Breast epithelium (tissue), 4 donors: ENCODE measurements at regions of chr17 and their contacts with region 1.

Region 1: DNA sequence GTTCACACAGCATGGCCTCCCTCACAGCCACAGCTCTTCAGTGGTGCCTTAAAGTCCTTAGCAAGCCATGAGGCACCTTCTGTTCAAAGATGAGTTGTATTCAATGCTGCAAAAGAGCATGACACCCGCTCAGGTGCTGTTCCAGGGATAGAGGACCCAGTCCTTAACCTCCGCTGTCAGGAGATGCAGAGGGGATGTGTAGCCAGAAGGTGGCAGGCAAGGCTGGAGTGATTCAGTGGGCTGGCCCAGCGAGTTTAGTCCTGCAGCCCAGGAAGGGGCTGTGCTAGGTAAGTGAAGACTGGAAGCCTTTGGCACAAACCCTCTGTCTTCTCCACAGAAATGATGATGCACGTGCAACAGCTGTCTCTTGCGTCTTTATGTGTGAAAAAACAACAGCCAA is 25.0 kb upstream of the ADAM11 start:
- DNase-seq: no peak
- H3K4me3 ChIP-seq: no peak overlapping the region
- H3K27ac ChIP-seq: no peak overlapping the region
- H3K4me1 ChIP-seq: no peaks in the 10 kb centered on the region
- H3K27me3 ChIP-seq: no peaks in the 10 kb centered on the region
- CTCF ChIP-seq: no peak
- POLR2A ChIP-seq: no peak

Region 2: GRCh38 chr17:43713494-43714162 is 1020.1 kb before region 1 on chr17:
- intact Hi-C with region 1: loop called (anchors 5 kb)
- DNase-seq: no peak
- H3K4me3 ChIP-seq: peak overlapping the region; percentile 38 to 66 (median 52)
- H3K27ac ChIP-seq: no peak overlapping the region
- H3K4me1 ChIP-seq: no peaks in the 10 kb centered on the region
- H3K27me3 ChIP-seq: no peaks in the 10 kb centered on the region
- CTCF ChIP-seq: no peak
- POLR2A ChIP-seq: no peak